ENCODE measurements at regions of chr11 and their contacts with region 1.

Region 1: DNA sequence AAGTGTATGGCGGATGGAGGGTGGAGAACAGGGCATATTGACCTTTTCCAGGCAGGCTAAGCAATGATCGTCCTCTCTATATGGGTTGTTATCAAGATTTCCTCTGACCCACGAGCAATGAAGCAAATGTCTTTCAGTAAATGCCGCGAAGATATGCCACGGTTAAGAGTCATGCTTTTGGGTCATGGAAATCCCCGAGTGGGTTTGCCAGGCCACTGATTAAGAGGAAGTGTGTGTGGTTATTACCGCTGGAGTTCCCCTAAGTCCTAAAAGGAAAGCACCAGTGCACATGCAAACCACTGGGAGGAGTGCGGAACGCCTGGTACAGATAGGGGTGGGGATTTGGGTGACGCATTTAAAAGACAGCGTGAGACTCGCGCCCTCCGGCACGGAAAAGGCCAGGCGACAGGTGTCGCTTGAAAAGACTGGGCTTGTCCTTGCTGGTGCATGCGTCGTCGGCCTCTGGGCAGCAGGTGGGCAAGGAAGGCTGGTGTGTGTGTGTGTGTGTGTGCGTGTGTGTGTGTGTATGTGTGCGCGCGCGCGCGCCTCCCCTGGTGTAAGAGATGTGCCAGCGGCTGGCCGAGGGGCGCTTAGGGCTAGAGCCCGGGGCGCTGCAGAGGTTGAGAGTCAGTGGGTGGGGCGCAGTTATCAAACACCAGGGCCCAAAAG is at the start of gene BIRC3:
- DNase-seq: peak; percentile 84 to 97 (median 93)
- H3K4me3 ChIP-seq: peak within 1 kb of the TSS; percentile 89
- H3K4me3 Mint-ChIP-seq: peak within 1 kb of the TSS; percentile 90 to 98 (median 95)
- H3K27ac ChIP-seq: peak within 1 kb of the TSS; percentile 86
- H3K27ac Mint-ChIP-seq: peak within 1 kb of the TSS; percentile 92 to 100 (median 99)
- H3K4me1 ChIP-seq: peaks cover 58% of the 10 kb centered on the region
- H3K4me1 Mint-ChIP-seq: peaks cover 68 to 79% (median 69%) of the 10 kb centered on the region in 3 donors
- H3K27me3 ChIP-seq: no peaks in the 10 kb centered on the region
- H3K27me3 Mint-ChIP-seq: peaks cover 0 to 3% of the 10 kb centered on the region in 2 donors
- total RNA-seq, gene BIRC3: 191 to 199 TPM

Region 2: DNA sequence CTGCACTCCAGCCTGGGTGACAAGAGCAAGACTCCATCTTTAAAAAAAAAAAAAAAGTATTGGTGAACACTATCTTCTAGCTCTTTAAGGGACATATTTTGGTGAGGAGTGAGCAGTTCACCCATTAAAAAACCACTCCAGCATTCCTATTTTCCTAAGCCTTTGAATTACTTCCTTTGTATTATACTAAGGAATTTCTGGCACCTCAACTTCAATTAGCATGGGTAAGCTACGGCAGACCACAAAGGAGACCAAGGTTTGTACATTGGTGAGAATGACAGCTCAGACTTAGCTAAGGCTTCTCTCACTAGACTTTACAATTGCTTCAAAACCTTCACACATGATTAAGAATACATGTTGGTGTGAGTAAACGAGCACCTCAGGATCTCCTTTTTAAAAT is 57.0 kb before region 1 on chr11:
- CTCF ChIA-PET with region 1: no interaction called
- POLR2A ChIA-PET with region 1: no interaction called
- DNase-seq: no peak
- H3K4me3 ChIP-seq: no peak overlapping the region
- H3K4me3 Mint-ChIP-seq: no peak overlapping the region
- H3K27ac ChIP-seq: no peak overlapping the region
- H3K27ac Mint-ChIP-seq: no peak overlapping the region
- H3K4me1 ChIP-seq: no peaks in the 10 kb centered on the region
- H3K4me1 Mint-ChIP-seq: no peaks in the 10 kb centered on the region
- H3K27me3 ChIP-seq: no peaks in the 10 kb centered on the region
- H3K27me3 Mint-ChIP-seq: peaks cover 0 to 3% of the 10 kb centered on the region in 2 donors

Region 3: GRCh38 chr11:102306048-102306585 is 11.1 kb before region 1 on chr11:
- CTCF ChIA-PET with region 1: interaction called, 34 read pairs
- POLR2A ChIA-PET with region 1: interaction called, 7 read pairs
- DNase-seq: no peak
- H3K4me3 ChIP-seq: peak overlapping the region; percentile 24
- H3K4me3 Mint-ChIP-seq: peak overlapping the region; percentile 24 to 78 (median 61)
- H3K27ac ChIP-seq: no peak overlapping the region
- H3K27ac Mint-ChIP-seq: peak overlapping the region; percentile 76 to 99 (median 90)
- H3K4me1 ChIP-seq: peaks cover 67% of the 10 kb centered on the region
- H3K4me1 Mint-ChIP-seq: peaks cover 55 to 78% (median 77%) of the 10 kb centered on the region in 3 donors
- H3K27me3 ChIP-seq: no peaks in the 10 kb centered on the region
- H3K27me3 Mint-ChIP-seq: peaks cover 0 to 1% of the 10 kb centered on the region in 2 donors

Measured in CD8-positive, alpha-beta memory T cell (primary cell).